PC-3 (cell line): ENCODE measurements at regions of chr6 and their contacts with region 1.

Region 1: DNA sequence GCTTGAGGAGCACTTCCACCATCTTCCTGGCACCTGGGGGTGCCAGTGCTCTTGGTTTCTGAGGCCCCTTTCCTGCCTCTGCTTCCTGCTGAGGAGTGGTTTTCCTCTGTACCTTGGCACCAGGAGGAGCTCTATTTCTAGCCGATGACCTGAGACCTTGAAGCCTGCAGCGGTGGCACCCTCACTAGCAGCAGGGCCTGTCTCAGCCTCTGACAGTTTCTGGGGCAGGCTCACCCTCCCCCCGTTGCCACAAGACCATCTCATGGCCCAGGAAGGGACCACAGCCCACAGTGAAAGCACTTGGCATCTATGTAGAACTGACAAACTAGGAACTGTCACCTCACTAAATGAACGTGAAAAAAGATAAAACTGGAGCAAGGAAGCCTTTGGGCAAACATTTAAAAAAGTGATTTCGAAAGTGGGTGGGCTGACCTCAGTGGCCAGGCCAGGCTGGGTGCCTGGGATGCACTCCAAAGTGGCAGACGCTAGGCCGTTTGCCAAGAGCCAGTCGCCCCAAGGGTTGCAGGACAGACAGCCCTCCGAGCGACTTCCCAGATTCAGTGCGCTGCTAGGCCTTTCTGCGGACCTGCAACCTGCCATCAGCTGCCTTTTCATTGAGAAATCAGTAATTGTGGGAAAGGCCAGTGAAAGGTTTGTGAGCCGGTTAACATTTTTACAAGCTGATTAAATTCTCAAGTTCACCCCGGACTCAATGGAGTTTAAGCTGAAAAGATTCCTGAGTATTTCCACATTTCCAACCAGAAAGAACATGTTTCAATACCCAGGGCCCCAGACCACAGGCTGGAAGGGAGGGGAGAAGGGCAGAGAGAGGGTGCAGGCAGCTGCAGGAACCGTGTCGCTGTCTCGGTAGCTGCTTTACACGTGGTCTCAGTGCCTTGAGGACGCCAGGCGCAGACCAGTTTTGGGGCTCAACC is 303.7 kb downstream of the ESR1 start:
- DNase-seq: no peak
- ATAC-seq: no peak
- H3K4me3 ChIP-seq: no peak overlapping the region
- H3K27ac ChIP-seq: no peak overlapping the region
- H3K4me1 ChIP-seq: no peaks in the 10 kb centered on the region
- H3K27me3 ChIP-seq: no peaks in the 10 kb centered on the region
- CTCF ChIP-seq: no peak

Region 2: GRCh38 chr6:151501511-151502136 is 609.5 kb before region 1 on chr6:
- CTCF ChIA-PET with region 1: no interaction called
- POLR2A ChIA-PET with region 1: no interaction called
- intact Hi-C with region 1: loop called (anchors 5 kb)
- DNase-seq: no peak
- ATAC-seq: no peak
- H3K4me3 ChIP-seq: no peak overlapping the region
- H3K27ac ChIP-seq: no peak overlapping the region
- H3K4me1 ChIP-seq: peaks cover 6% of the 10 kb centered on the region; the same call in 1 of the 2 replicates
- H3K27me3 ChIP-seq: no peaks in the 10 kb centered on the region
- CTCF ChIP-seq: no peak

Region 3: DNA sequence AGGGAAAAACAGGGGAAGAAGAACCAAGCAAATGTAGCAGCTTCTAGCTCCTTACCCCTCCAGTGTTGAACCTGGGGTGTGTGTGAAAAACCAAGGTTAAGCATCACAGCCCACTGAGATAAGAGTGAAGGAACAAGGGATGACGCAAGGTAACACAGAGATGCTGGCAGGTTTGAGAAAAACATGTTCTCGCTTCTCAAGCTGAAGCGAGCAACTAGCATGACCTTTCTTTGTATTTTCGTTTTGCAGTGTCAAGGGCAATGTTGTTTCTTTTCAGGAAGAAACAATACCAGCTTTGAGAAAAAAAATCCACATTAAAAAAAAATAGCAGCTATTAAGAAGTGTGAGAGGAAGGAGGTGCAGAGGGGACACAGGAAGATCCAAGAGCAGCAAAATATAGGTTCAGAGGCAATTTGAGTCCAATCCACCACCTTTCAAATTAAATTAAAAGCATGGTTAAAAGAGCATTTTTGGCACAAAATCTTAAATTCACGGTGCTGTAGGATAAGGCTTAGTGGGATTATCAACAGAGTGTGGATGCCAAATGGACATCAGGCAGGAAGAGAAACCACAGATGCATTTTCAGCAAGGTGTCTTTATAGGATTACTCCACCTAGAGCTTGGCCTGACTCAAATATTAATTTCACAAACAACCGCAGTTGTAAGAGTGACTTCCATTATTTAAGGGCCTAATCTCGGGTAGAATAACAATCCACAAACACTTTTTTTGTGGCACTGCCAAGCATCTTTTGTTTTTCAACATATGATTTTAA is 455.1 kb after region 1 on chr6:
- CTCF ChIA-PET with region 1: no interaction called
- POLR2A ChIA-PET with region 1: no interaction called
- intact Hi-C with region 1: no loop called
- DNase-seq: no peak
- ATAC-seq: no peak
- H3K4me3 ChIP-seq: no peak overlapping the region
- H3K27ac ChIP-seq: no peak overlapping the region
- H3K4me1 ChIP-seq: no peaks in the 10 kb centered on the region
- H3K27me3 ChIP-seq: peaks cover 88% of the 10 kb centered on the region
- CTCF ChIP-seq: no peak

Region 4: GRCh38 chr6:152696522-152696921 is 585.4 kb after region 1 on chr6:
- CTCF ChIA-PET with region 1: no interaction called
- POLR2A ChIA-PET with region 1: no interaction called
- intact Hi-C with region 1: no loop called
- DNase-seq: peak; percentile 69
- ATAC-seq: peak; percentile 73
- H3K4me3 ChIP-seq: no peak overlapping the region
- H3K27ac ChIP-seq: 0 out of 2 replicates have a peak overlapping the region, but pooled peaks have one; percentile 28
- H3K4me1 ChIP-seq: peaks cover 10% of the 10 kb centered on the region
- H3K27me3 ChIP-seq: peaks cover 21% of the 10 kb centered on the region
- CTCF ChIP-seq: no peak